Activated CD4-positive, alpha-beta memory T cell treated with anti-CD3 and anti-CD28 coated beads, Interleukin-2, amount 10 ng/mL, durations not matched to agents 7 days and 5 days (primary cell): ENCODE measurements at regions of chr1 and their contacts with region 1.

Region 1: DNA sequence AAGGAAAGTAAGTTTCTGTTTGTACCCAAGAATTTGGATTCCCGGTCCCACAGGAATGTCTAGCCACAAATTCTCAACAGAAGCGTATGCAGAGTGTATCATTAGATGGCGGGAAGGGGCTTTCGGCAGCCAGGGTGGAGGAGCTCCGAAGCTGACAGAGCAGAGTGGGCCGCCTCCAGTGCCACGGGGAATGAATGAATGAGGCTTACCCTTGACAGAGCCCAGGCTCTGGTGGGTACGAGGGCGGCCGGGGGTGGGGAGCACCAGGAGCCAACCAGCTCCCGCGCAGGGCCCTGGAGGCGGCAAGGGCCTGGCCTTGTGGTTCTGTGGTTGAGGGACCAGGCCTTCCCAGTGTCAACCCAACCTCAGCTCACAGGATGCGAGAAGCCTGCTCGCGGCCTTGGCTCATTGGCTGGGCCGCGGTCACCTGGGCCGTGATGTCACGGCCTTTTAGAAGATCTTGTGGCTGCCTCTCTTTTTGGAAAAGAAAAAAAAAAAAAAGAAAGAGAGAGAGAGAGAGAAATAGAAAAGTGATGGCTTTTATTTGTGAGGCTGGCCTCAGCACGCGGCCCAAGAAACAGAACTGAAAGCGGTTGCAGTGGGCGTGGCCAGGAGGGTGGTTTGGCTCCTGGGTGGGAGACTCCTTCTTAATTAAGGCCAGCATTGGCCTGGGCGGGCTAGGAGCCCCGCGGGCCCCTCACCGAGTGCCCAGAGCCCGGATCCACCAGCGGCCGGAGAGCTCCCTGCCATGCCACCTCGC is 34.9 kb upstream of the RUNX3 start:
- DNase-seq: peak; percentile 98
- H3K4me3 Mint-ChIP-seq: peak overlapping the region; percentile 95
- H3K27ac Mint-ChIP-seq: peak overlapping the region; percentile 94
- H3K4me1 Mint-ChIP-seq: peaks cover 80% of the 10 kb centered on the region
- H3K27me3 Mint-ChIP-seq: no peaks in the 10 kb centered on the region

Region 2: DNA sequence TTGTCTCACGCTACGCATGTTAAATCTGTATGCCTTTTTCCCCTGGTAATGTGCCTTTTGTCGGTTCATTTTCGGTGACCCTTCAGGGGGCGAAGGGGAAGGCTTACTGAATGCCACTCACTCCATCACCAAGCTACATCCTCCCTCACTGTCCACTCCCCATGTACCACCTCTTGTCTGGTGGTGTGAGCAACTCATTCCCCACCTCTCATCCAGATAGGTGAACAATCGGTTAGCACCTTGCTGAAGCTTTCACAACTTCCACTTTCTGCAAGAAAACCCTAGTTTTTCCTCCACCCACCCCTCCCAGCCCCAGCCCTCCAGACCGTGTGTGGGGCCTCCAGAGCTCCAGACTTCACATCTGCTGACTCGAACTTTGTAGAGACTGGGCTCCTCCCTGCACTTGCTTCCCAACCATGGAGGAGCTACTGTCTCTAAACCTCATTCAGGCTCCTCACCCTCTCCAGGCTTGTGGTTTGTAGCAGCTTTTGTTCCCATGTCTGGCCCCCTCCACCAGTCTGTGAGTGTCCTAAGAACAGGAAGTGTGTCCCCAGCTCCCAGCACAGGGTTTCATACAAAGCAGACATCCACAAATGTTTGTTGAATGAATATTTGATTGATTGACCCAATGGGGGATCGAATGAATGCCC is 13.5 kb after region 1 on chr1:
- CTCF ChIA-PET with region 1: interaction called, 7 read pairs
- POLR2A ChIA-PET with region 1: interaction called, 19 read pairs
- DNase-seq: no peak
- H3K4me3 Mint-ChIP-seq: no peak overlapping the region
- H3K27ac Mint-ChIP-seq: no peak overlapping the region
- H3K4me1 Mint-ChIP-seq: peaks cover 67% of the 10 kb centered on the region
- H3K27me3 Mint-ChIP-seq: peaks cover 15% of the 10 kb centered on the region

Region 3: GRCh38 chr1:24990779-24991641 is 26.0 kb after region 1 on chr1:
- CTCF ChIA-PET with region 1: interaction called, 7 read pairs
- POLR2A ChIA-PET with region 1: interaction called, 11 read pairs
- DNase-seq: no peak
- H3K4me3 Mint-ChIP-seq: no peak overlapping the region
- H3K27ac Mint-ChIP-seq: peak overlapping the region; percentile 97
- H3K4me1 Mint-ChIP-seq: peaks cover 88% of the 10 kb centered on the region
- H3K27me3 Mint-ChIP-seq: peaks cover 10% of the 10 kb centered on the region

Region 4: DNA sequence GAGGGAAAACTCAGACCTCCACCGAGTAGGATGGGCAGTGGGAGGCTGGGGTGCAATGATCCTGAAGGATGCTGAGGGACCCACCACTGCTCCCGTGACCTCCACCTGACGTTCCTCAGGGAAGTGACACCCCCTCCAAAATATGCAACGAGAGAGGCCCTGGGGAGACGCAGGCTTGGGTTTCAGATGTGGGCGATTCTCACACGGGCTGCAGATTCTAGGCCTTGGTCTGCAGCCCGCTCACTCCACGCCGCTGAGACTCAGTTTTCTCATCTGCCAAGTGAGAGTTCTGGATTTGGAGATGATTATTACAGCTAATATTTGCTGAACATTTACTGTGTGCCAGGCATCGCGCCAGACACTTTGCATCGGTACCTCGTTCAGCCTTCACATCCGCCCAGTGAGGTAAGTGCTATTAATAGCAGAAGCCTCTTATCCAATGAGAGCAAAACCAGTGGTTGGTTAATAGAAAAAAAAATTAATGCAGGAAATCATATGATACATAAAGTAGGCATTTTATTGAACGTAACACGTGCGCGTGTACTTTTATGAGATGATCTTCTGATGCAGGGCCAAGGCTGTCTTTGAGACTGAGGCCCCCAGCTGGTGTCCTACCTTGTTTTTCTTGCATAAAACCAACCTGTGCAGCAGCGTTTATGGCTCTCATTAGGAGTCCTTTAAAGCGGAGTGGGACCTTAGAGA is 67.1 kb after region 1 on chr1:
- CTCF ChIA-PET with region 1: interaction called, 126 read pairs
- POLR2A ChIA-PET with region 1: interaction called, 137 read pairs
- DNase-seq: peak; percentile 70
- H3K4me3 Mint-ChIP-seq: peak overlapping the region; percentile 72
- H3K27ac Mint-ChIP-seq: peak overlapping the region; percentile 93
- H3K4me1 Mint-ChIP-seq: peaks cover 73% of the 10 kb centered on the region
- H3K27me3 Mint-ChIP-seq: no peaks in the 10 kb centered on the region